ENCODE measurements at regions of chr11 and their contacts with region 1.

Region 1: DNA sequence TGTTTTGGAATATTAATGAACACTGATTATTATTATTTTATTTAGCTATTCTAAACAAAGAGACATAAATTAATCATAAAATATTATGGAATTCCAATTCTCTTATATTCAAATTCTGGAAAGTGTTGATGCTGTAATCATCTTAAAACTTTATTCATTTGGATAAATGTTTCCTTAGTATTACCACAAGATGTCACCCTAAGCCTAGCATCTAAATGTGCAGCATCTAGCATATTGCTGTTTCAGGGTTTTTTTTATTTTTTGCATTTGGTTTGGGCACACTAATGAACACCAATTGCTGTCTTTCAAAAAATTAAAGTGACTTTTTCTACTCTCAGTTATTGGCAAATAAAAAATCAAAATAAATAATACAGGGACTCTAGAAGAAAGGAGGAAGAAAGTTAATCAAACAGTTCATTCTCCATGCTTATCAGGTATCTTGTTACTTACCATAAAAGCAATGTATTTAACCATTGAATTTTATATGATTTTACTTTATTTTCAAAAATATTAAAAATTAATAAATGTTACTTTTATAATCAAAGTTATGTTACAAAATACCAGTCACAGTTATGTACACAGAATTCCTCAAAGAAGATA is 31.8 kb downstream of the DLG2 start:
- DNase-seq: peak; percentile 17
- ATAC-seq: peak; percentile 65; the same call in 1 of the 2 replicates
- H3K4me3 ChIP-seq: no peak overlapping the region
- H3K27ac ChIP-seq: no peak overlapping the region
- H3K4me1 ChIP-seq: no peaks in the 10 kb centered on the region
- H3K27me3 ChIP-seq: no peaks in the 10 kb centered on the region
- CTCF ChIP-seq: peak; percentile 73; the same call in 1 of the 2 replicates

Region 2: DNA sequence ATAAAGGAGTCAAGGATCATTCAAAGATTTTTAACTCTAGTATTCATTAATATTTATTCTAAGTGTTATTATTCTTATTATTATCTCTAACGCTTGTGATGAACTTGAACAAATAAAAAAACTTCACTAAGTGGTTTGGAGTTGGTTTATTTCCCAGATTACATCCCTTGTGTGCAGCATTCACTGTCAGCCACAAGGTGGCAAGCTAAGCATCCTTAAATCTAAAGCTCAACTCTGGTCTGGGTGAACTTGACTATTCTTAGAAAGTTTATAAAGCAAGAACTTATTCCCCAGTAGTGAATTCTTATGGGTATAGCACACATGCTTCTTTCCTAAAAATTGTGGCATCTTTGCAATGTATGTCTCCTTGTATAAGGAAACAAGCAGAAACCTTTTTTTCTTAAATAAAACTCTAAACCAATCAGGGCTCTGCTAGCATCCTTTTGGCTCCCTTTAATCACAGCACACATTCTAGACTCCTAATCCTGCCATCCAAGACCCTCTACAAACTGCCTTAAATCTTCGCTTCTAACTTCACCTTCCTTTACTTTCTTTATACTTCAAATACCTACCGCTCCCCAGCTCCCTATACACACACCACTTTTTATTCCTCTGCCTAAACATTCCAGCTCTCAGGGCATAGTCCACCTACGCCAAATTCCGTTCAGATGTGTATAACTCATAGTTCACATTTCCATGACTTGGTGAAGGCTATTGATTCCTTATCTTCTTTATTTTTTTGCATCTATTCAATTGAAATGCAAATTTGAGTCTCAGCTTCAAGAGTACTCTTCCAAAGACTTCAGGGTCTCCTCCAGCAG is 1037.1 kb before region 1 on chr11:
- CTCF ChIA-PET with region 1: interaction called, 4 read pairs
- POLR2A ChIA-PET with region 1: no interaction called
- in situ Hi-C with region 1: no loop called
- intact Hi-C with region 1: loop called (anchors 5 kb)
- DNase-seq: peak; percentile 20
- ATAC-seq: peak; percentile 89
- H3K4me3 ChIP-seq: no peak overlapping the region
- H3K27ac ChIP-seq: no peak overlapping the region
- H3K4me1 ChIP-seq: no peaks in the 10 kb centered on the region
- H3K27me3 ChIP-seq: no peaks in the 10 kb centered on the region
- CTCF ChIP-seq: peak; percentile 83

Region 3: DNA sequence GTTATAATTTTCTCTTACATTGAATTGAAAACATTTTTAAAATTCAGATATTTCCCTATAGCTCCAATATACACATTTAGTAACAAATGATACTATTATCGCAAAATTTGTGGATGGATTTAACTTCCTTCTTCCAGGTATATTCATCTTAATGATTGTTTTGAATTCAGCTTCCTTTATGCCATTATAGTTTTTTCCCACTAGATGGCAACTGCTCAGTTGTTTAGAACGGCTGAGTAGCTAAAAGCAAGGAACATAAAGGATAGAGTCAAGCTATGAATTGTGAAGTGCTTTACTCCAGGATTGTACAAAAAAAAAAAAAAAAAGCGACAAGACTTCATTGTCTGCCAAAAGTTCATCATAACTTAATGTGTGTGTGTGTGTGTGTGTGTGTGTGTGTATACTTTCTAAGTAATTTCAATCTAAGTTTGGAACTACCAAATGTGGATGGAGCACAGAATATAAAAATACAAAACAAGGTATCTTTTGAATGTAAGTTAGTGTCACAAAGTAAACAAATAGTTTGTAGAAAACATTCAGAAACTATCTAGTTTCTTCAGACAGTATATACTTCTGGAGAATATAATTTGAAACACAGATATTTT is 814.6 kb before region 1 on chr11:
- CTCF ChIA-PET with region 1: interaction called, 4 read pairs
- POLR2A ChIA-PET with region 1: no interaction called
- in situ Hi-C with region 1: no loop called
- intact Hi-C with region 1: loop called (anchors 1 kb)
- DNase-seq: peak; percentile 5
- ATAC-seq: 0 out of 2 replicates have a peak, but pooled peaks have one; percentile 65
- H3K4me3 ChIP-seq: no peak overlapping the region
- H3K27ac ChIP-seq: no peak overlapping the region
- H3K4me1 ChIP-seq: no peaks in the 10 kb centered on the region
- H3K27me3 ChIP-seq: no peaks in the 10 kb centered on the region
- CTCF ChIP-seq: peak; percentile 62; the same call in 1 of the 2 replicates

Region 4: DNA sequence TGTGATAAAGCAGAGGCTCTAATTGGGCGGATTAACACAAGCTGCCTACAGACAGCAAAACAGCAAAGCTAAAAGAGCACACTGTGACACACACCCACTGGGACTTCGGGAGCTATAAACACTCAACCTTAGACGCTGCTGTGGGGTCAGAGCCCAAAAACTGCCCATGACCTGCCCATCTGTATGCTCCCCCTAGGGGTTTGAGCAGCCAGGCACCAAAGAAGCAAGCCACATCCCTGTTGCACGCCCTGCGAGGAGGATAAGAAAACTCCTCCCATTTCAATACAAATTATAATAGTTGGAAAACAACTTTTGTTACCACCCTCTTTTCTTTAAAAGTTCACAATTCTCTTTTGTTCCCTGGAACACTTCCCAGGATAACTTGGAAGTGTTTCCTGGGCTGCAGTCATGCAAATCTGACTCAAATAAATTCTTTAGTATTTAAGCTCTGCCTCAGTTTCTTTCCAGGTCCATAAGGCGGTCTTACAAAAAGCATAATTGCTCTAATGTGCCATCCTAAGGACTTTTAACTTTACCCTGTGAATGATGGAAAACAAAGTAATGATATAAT is 54.7 kb before region 1 on chr11:
- CTCF ChIA-PET with region 1: no interaction called
- POLR2A ChIA-PET with region 1: no interaction called
- in situ Hi-C with region 1: no loop called
- intact Hi-C with region 1: no loop called
- DNase-seq: no peak
- ATAC-seq: 0 out of 2 replicates have a peak, but pooled peaks have one; percentile 42
- H3K4me3 ChIP-seq: no peak overlapping the region
- H3K27ac ChIP-seq: no peak overlapping the region
- H3K4me1 ChIP-seq: no peaks in the 10 kb centered on the region
- H3K27me3 ChIP-seq: no peaks in the 10 kb centered on the region
- CTCF ChIP-seq: peak; percentile 9; the same call in 1 of the 2 replicates

Region 5: DNA sequence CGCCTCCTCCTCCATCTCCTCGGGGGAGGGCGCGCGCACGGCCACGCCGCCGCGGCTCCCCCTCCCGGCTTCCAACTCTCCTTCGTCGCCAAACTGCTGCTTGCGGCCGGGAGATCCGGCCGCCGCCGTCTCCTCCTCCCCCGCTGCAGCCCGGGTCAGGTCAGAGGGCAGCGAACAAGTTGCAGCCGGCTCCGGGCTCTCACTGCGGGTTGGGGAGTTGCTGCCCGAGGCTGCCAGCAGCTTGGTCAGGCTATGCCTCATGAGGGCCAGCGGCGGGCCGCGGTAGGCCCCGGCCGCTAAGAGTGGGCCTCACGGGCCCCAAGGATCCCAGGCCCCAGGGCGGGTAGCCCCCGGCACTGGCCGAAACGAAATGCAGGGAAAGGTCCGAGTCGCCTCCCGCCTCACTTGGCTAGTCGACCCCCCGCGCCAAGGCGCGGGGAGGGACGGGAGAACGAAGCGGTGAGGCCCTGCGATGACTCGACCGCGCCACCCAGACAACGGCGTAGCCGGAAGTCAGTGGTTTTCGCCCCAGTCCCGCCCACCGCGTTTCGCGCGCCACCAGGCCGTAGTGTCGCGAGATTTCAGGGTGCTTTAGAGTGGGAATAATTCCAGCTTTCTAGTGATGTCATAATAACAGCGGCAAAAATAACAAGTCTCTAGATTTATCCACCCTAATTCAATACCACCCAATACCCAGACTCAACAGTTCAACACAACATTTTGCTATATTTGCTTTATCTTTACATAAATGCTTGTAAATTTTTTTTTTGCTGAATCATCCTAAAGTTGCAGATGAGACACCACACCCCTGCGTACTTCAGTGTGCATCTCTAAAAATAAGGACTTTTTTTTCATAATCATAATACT is 69.5 kb after region 1 on chr11 and contains the start of gene CREBZF:
- CTCF ChIA-PET with region 1: no interaction called
- POLR2A ChIA-PET with region 1: no interaction called
- in situ Hi-C with region 1: no loop called
- intact Hi-C with region 1: loop called (anchors 5 kb)
- DNase-seq: peak; percentile 89
- ATAC-seq: peak; percentile 96
- H3K4me3 ChIP-seq: peak within 1 kb of the TSS; percentile 68 to 98
- H3K27ac ChIP-seq: peak within 1 kb of the TSS; percentile 90
- H3K4me1 ChIP-seq: peaks cover 33% of the 10 kb centered on the region
- H3K27me3 ChIP-seq: no peaks in the 10 kb centered on the region
- CTCF ChIP-seq: no peak
- total RNA-seq, gene CREBZF: 75.8 TPM

Region 6: DNA sequence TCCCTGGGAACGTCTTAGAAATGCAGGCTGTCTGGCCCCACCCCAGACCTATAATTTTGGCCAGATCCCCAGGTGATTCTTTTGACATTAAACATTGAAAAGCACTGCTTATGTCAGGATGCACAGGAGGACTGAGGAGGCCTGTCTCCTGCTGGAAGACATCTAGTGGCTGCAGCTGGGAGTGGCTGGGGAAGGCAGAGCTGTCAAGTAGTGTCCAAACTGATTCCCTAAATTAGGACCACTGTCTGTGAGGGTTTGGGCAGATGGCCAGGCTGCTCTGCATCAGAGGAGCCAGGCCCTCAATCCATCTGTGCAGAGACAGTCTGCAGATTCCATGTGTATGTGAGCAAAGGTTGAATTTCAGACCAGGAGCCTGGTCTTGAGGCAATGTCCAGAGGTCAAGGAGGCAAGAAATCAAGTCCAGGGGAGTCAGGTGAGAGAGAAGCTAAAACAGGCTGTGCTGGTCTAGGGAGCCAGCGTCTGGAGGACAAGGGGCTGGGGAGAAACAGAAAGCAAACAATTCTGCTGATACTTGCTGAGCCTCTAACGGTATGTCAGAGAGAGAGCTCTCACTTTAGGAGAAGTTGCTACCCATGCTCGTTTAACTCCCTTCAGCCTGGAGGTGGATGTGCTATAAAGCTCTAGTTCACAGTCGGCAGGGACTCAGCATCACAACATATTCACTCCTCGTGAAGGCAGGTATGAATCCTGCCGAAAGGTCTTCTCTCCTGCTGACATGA is 230.9 kb after region 1 on chr11:
- CTCF ChIA-PET with region 1: no interaction called
- POLR2A ChIA-PET with region 1: no interaction called
- in situ Hi-C with region 1: no loop called
- intact Hi-C with region 1: loop called (anchors 10 kb)
- DNase-seq: no peak
- ATAC-seq: peak; percentile 47
- H3K4me3 ChIP-seq: no peak overlapping the region
- H3K27ac ChIP-seq: peak overlapping the region; percentile 95
- H3K4me1 ChIP-seq: peaks cover 55% of the 10 kb centered on the region
- H3K27me3 ChIP-seq: no peaks in the 10 kb centered on the region
- CTCF ChIP-seq: peak; percentile 86